Activated CD8-positive, alpha-beta memory T cell treated with anti-CD3 and anti-CD28 coated beads, Interleukin-2, amount 10 ng/mL, durations not matched to agents 7 days and 5 days (primary cell): ENCODE measurements at regions of chr13 and their contacts with region 1.

Region 1: DNA sequence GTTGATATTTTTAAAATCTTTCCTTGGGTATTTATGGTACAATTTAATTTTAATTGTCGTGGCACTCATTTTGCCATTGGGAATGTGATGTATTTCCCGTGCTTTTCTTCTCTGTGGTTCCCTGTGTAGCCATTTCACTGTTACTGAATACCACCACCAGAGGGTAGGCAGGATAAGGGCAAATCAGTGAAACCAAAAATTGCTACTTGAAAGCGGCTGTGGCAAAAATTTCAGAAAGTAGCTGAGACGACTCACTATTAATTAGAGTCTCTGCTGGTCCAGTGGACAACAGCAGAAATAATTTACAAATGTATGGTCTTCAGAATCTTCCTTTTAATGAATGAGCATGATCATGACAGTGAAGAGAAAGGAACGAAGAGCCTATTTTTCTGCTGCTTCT is 34.4 kb upstream of the MIR17HG start:
- DNase-seq: no peak
- ATAC-seq: peak; percentile 60
- H3K4me3 Mint-ChIP-seq: peak overlapping the region; percentile 41
- H3K27ac Mint-ChIP-seq: no peak overlapping the region
- H3K4me1 Mint-ChIP-seq: peaks cover 25% of the 10 kb centered on the region
- H3K27me3 Mint-ChIP-seq: peaks cover 30% of the 10 kb centered on the region

Region 2: DNA sequence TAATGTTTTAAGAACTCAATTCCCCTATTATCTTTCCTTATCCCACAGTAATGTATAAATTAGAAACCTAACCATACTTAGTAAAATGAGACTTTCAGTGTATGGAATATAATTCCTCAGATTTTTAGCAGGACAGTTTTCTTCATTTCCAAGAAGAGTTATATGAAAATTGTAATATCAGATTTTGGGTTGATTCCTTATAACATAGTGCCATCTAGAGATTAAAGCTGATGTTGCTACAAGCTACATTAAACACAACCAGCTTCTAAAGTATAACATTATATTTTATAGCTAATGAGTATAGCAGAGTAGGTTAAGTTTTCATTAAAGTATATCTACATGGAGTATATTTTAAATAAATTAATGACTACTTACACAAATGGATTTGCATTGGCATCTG is 65.3 kb before region 1 on chr13:
- CTCF ChIA-PET with region 1: no interaction called
- DNase-seq: no peak
- ATAC-seq: no peak
- H3K4me3 Mint-ChIP-seq: no peak overlapping the region
- H3K27ac Mint-ChIP-seq: no peak overlapping the region
- H3K4me1 Mint-ChIP-seq: no peaks in the 10 kb centered on the region
- H3K27me3 Mint-ChIP-seq: peaks cover 15% of the 10 kb centered on the region

Region 3: GRCh38 chr13:91296011-91296410 is 17.1 kb before region 1 on chr13:
- CTCF ChIA-PET with region 1: no interaction called
- DNase-seq: no peak
- ATAC-seq: no peak
- H3K4me3 Mint-ChIP-seq: no peak overlapping the region
- H3K27ac Mint-ChIP-seq: no peak overlapping the region
- H3K4me1 Mint-ChIP-seq: no peaks in the 10 kb centered on the region
- H3K27me3 Mint-ChIP-seq: peaks cover 14% of the 10 kb centered on the region

Region 4: GRCh38 chr13:91347202-91347995 is 34.3 kb after region 1 on chr13 and contains the start of gene MIR17HG:
- CTCF ChIA-PET with region 1: interaction called, 16 read pairs
- DNase-seq: peak; percentile 92
- ATAC-seq: peak; percentile 74
- H3K4me3 Mint-ChIP-seq: peak within 1 kb of the TSS; percentile 95
- H3K27ac Mint-ChIP-seq: peak within 1 kb of the TSS; percentile 95
- H3K4me1 Mint-ChIP-seq: peaks cover 48% of the 10 kb centered on the region
- H3K27me3 Mint-ChIP-seq: no peaks in the 10 kb centered on the region
- total RNA-seq, gene MIR17HG: 8.4 to 15.5 TPM

Region 5: DNA sequence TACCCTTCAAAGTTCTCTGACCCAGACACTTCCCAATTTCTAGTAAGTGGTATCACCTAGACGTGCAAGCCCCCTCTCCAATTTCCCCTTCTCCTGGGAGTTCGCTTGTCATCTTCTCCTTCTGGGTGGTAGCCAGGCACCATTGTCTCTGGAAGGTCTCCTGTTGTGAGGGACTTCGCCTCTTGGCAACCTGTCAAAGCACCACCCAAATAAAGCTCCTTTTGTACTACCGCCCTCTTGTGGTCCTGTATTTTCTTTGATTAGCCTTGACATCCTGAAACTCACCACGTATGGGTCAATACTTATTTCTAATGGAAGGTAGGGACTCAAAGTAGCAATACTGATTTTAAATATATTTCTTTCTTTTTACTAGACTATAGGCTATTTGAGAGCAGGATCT is 93.5 kb after region 1 on chr13:
- CTCF ChIA-PET with region 1: interaction called, 24 read pairs
- DNase-seq: peak; percentile 46
- ATAC-seq: peak; percentile 71
- H3K4me3 Mint-ChIP-seq: no peak overlapping the region
- H3K27ac Mint-ChIP-seq: no peak overlapping the region
- H3K4me1 Mint-ChIP-seq: no peaks in the 10 kb centered on the region
- H3K27me3 Mint-ChIP-seq: peaks cover 39% of the 10 kb centered on the region